ENCODE measurements at regions of chr20 and their contacts with region 1.

Region 1: DNA sequence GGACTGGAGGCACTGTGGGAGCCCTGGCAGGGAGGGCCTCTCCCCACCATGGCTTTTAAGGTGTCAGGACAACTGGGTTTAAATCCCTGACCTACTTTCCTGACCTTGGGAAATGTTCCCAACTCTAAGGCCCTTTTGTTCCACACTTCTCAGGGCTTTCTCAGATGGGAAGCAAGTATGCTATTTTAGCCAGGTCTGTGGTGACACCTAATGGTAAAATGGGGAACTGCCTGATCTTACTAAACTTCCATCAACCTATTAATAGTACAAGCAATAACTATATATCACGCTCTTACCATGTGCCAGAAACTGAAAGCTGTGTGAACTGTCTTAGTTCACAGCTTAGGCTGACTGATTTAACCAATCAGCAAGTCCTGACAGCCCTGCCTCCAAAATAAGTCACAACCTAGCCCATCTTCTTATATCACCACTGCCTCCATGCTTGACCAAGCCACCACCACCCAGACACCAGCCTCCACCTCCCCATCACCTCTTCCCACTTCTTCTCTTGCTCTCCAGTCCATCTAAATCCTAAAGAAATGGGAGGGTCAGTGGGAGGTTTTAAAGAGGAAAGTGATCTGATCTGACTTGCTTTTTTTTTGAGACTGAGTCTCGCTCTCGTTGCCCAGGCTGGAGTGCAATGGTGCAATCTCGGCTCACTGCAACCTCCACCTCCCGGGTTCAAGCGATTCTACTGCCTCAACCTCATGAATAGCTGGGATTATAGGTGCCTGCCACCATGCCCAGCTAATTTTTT is 6.9 kb upstream of the BLCAP start:
- DNase-seq: no peak
- H3K4me3 ChIP-seq: no peak overlapping the region
- H3K27ac ChIP-seq: peak overlapping the region in 2 of 4 donors; percentile 29 to 42
- H3K4me1 ChIP-seq: peaks cover 0 to 11% (median 8%) of the 10 kb centered on the region in 4 donors
- H3K27me3 ChIP-seq: no peaks in the 10 kb centered on the region
- CTCF ChIP-seq: peak; percentile 88 to 92 (median 92)
- EP300 ChIP-seq: no peak
- POLR2A ChIP-seq: no peak

Region 2: GRCh38 chr20:37192137-37192854 is 342.3 kb before region 1 on chr20:
- intact Hi-C with region 1: loop called (anchors 5 kb)
- DNase-seq: peak; percentile 95
- H3K4me3 ChIP-seq: no peak overlapping the region
- H3K27ac ChIP-seq: peak overlapping the region in 1 of 4 donors; percentile 18
- H3K4me1 ChIP-seq: peaks cover 33 to 69% (median 67%) of the 10 kb centered on the region in 4 donors
- H3K27me3 ChIP-seq: no peaks in the 10 kb centered on the region
- CTCF ChIP-seq: peak; percentile 91 to 94 (median 93)
- EP300 ChIP-seq: no peak
- POLR2A ChIP-seq: no peak

Region 3: GRCh38 chr20:37267667-37268313 is 266.8 kb before region 1 on chr20:
- intact Hi-C with region 1: loop called (anchors 2 kb)
- DNase-seq: no peak
- H3K4me3 ChIP-seq: no peak overlapping the region
- H3K27ac ChIP-seq: no peak overlapping the region
- H3K4me1 ChIP-seq: peaks cover 0 to 8% (median 7%) of the 10 kb centered on the region in 4 donors
- H3K27me3 ChIP-seq: no peaks in the 10 kb centered on the region
- CTCF ChIP-seq: no peak
- EP300 ChIP-seq: no peak
- POLR2A ChIP-seq: no peak

Region 4: DNA sequence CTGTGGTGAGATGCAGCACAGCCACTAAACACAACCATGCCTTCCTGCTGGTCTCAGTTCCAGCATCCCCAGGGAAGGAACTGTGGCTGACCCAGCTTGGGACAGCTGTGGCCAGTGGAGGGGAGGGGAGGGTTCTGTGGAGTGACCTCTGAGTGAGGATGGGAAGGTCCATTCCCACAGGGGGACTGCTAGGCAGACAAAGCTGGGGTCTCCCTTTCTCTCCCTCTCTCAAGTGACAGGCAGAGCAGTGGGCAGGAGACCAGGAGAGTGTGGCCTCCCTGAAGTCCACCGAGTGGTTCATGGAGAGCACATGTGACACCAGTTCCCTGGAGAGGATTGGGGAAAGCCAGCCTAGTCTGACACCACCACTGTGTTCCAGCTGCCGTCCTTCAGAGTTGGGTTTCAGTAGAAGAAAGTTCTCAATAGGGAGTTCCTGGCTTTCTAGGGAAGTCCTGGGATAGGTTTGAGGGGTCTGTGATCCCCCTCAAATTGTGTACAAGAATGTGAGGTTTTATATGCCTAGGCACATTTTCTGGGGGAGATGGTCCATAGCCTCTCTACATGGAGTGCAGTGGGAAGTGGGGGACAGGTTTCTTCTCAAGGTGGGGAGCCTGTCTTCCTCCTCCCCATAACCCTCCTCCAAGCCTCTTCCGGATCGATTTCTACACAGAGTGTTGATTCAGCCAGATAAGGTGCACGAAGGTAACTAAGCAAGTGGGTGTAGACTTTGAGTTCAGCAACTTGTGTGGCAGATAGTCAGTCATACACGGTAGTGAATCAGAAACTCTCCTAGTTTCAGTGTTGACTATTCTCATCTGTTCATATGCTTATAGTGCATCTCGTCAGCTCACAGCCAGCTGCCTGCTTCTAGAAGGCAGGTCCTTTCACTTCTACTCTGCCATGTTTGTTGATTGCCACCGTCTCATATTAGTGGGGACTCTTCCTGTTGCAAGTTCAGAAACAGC is 226.2 kb before region 1 on chr20:
- intact Hi-C with region 1: no loop called
- DNase-seq: no peak
- H3K4me3 ChIP-seq: no peak overlapping the region
- H3K27ac ChIP-seq: no peak overlapping the region
- H3K4me1 ChIP-seq: peaks cover 8 to 69% (median 40%) of the 10 kb centered on the region in 4 donors
- H3K27me3 ChIP-seq: no peaks in the 10 kb centered on the region
- CTCF ChIP-seq: no peak
- EP300 ChIP-seq: no peak
- POLR2A ChIP-seq: no peak

Region 5: DNA sequence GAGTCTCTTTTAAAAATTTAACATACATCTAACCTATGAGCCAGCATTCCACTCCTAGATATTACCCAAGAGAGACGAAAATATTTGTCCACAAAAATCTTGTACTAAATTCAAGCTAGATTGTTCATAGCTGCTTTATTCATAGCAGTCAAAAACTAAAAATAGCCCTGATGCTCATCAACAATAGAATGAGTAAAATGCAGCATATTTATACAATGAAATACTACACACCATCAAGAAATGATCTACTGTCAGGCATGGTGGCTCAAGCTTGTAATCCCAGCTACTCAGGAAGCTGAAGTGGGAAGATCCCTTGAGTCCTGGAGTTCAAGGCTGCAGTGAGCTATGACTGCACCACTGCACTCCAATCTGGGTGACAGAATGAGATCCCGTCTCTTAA is 210.6 kb before region 1 on chr20:
- intact Hi-C with region 1: no loop called
- DNase-seq: no peak
- H3K4me3 ChIP-seq: no peak overlapping the region
- H3K27ac ChIP-seq: peak overlapping the region in 1 of 4 donors; percentile 4
- H3K4me1 ChIP-seq: peaks cover 0 to 30% (median 30%) of the 10 kb centered on the region in 4 donors
- H3K27me3 ChIP-seq: no peaks in the 10 kb centered on the region
- CTCF ChIP-seq: no peak
- EP300 ChIP-seq: no peak
- POLR2A ChIP-seq: no peak

Region 6: GRCh38 chr20:37336369-37337207 is 198.0 kb before region 1 on chr20:
- intact Hi-C with region 1: no loop called
- DNase-seq: no peak
- H3K4me3 ChIP-seq: peak overlapping the region in 2 of 4 donors; percentile 13 to 22
- H3K27ac ChIP-seq: peak overlapping the region in 1 of 4 donors; percentile 25
- H3K4me1 ChIP-seq: peaks cover 21 to 28% (median 24%) of the 10 kb centered on the region in 4 donors
- H3K27me3 ChIP-seq: no peaks in the 10 kb centered on the region
- CTCF ChIP-seq: no peak
- EP300 ChIP-seq: no peak
- POLR2A ChIP-seq: no peak

Region 7: GRCh38 chr20:37406010-37406998 is 128.3 kb before region 1 on chr20:
- intact Hi-C with region 1: loop called (anchors 5 kb)
- DNase-seq: no peak
- H3K4me3 ChIP-seq: peak overlapping the region; percentile 37 to 52 (median 46)
- H3K27ac ChIP-seq: no peak overlapping the region
- H3K4me1 ChIP-seq: peaks cover 3 to 35% (median 33%) of the 10 kb centered on the region in 4 donors
- H3K27me3 ChIP-seq: peaks cover 0 to 35% (median 3%) of the 10 kb centered on the region in 4 donors
- CTCF ChIP-seq: no peak
- EP300 ChIP-seq: no peak
- POLR2A ChIP-seq: no peak

Measured in esophagus muscularis mucosa (tissue), 4 donors.